CD4-positive, alpha-beta T cell (primary cell): ENCODE measurements at regions of chr20 and their contacts with region 1.

Region 1: GRCh38 chr20:15081261-15081660 is 743.8 kb upstream of the FLRT3 start:
- DNase-seq: no peak
- ATAC-seq: no peak
- H3K4me3 ChIP-seq: no peak overlapping the region
- H3K4me3 Mint-ChIP-seq: no peak overlapping the region
- H3K27ac ChIP-seq: no peak overlapping the region
- H3K27ac Mint-ChIP-seq: no peak overlapping the region
- H3K4me1 ChIP-seq: no peaks in the 10 kb centered on the region
- H3K4me1 Mint-ChIP-seq: no peaks in the 10 kb centered on the region
- H3K27me3 ChIP-seq: no peaks in the 10 kb centered on the region
- H3K27me3 Mint-ChIP-seq: no peaks in the 10 kb centered on the region
- CTCF ChIP-seq: no peak

Region 2: GRCh38 chr20:15091421-15092037 is 10.3 kb after region 1 on chr20:
- CTCF ChIA-PET with region 1: no interaction called
- POLR2A ChIA-PET with region 1: no interaction called
- intact Hi-C with region 1: no loop called
- DNase-seq: no peak
- ATAC-seq: no peak
- H3K4me3 ChIP-seq: no peak overlapping the region
- H3K4me3 Mint-ChIP-seq: no peak overlapping the region
- H3K27ac ChIP-seq: no peak overlapping the region
- H3K27ac Mint-ChIP-seq: no peak overlapping the region
- H3K4me1 ChIP-seq: no peaks in the 10 kb centered on the region
- H3K4me1 Mint-ChIP-seq: no peaks in the 10 kb centered on the region
- H3K27me3 ChIP-seq: no peaks in the 10 kb centered on the region
- H3K27me3 Mint-ChIP-seq: no peaks in the 10 kb centered on the region
- CTCF ChIP-seq: no peak

Region 3: GRCh38 chr20:15146948-15147347 is 65.7 kb after region 1 on chr20:
- CTCF ChIA-PET with region 1: no interaction called
- POLR2A ChIA-PET with region 1: no interaction called
- intact Hi-C with region 1: loop called in 1 of 2 experiments (anchors 10 kb)
- DNase-seq: no peak
- ATAC-seq: no peak
- H3K4me3 ChIP-seq: no peak overlapping the region
- H3K4me3 Mint-ChIP-seq: no peak overlapping the region
- H3K27ac ChIP-seq: no peak overlapping the region
- H3K27ac Mint-ChIP-seq: no peak overlapping the region
- H3K4me1 ChIP-seq: no peaks in the 10 kb centered on the region
- H3K4me1 Mint-ChIP-seq: no peaks in the 10 kb centered on the region
- H3K27me3 ChIP-seq: no peaks in the 10 kb centered on the region
- H3K27me3 Mint-ChIP-seq: no peaks in the 10 kb centered on the region
- CTCF ChIP-seq: no peak